Ascending aorta (tissue), 2 donors: ENCODE measurements at regions of chr22 and their contacts with region 1.

Region 1: DNA sequence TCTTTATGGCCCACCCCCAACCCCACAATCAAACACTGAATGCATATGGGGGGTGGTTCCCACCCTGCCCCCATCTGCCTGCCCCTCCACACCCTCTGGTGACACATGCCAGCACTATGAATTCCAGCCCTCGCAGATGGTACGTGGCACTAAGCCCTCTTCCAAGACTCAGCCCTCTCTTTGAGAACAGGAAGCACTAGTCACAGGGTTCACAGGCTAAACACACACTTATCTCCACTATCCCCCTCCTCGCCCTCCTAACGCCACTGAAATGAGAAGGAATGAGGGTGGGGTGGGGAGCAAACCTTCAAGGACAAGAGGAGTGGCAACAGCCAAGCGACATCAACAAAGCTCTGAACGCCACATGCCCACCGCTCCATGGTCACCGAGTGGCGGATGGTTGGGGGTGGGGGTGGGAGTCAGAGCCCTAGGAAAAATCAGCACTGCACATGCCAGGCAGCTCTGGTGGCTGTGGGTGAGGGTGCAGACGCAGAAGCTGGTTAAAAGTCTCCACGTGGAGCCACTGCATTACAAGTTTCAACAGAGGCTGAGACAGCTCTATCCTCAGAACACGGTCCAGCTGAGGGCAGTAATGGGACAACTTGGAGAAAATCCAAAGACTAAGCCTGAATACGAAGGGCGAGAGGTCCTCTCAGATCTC is 33.6 kb downstream of the TMEM184B start:
- DNase-seq: peak in 1 of 2 donors; percentile 85
- H3K4me3 ChIP-seq: peak overlapping the region in 1 of 2 donors; percentile 29
- H3K27ac ChIP-seq: peak overlapping the region; percentile 75 to 81
- H3K4me1 ChIP-seq: peaks cover 9 to 36% of the 10 kb centered on the region in 2 donors
- H3K27me3 ChIP-seq: no peaks in the 10 kb centered on the region
- CTCF ChIP-seq: peak in 2 of 3 experiments; percentile 37 to 50

Region 2: DNA sequence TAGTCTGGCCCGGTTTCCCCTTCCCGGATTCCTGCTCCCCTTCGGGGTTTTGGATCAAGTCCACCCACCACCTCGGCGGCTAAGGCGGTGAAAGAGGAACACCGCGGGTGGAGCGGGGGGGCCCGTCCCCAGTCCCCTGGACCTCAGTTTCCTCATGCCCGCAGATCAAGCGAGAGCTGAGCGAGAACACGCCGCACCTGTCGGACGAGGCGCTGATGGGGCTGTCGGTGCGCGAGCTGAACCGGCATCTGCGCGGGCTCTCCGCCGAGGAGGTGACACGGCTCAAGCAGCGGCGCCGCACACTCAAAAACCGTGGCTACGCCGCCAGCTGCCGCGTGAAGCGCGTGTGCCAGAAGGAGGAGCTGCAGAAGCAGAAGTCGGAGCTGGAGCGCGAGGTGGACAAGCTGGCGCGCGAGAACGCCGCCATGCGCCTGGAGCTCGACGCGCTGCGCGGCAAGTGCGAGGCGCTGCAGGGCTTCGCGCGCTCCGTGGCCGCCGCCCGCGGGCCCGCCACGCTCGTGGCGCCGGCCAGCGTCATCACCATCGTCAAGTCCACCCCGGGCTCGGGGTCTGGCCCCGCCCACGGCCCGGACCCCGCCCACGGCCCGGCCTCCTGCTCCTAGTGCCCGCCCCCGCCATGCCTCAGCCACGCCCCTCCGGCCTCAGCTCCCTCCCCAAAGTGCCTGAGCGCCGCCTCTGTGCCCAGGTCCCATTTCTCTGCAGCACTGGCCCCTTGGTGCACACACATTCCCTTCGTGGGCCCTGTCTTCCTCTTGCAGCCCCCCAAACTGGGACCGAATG is 24.8 kb before region 1 on chr22:
- intact Hi-C with region 1: loop called (anchors 2 kb)
- DNase-seq: no peak
- H3K4me3 ChIP-seq: peak overlapping the region in 1 of 2 donors; percentile 50
- H3K27ac ChIP-seq: peak overlapping the region; percentile 30 to 35
- H3K4me1 ChIP-seq: peaks cover 21 to 29% of the 10 kb centered on the region in 2 donors
- H3K27me3 ChIP-seq: no peaks in the 10 kb centered on the region
- CTCF ChIP-seq: peak in 1 of 3 experiments; percentile 24

Region 3: DNA sequence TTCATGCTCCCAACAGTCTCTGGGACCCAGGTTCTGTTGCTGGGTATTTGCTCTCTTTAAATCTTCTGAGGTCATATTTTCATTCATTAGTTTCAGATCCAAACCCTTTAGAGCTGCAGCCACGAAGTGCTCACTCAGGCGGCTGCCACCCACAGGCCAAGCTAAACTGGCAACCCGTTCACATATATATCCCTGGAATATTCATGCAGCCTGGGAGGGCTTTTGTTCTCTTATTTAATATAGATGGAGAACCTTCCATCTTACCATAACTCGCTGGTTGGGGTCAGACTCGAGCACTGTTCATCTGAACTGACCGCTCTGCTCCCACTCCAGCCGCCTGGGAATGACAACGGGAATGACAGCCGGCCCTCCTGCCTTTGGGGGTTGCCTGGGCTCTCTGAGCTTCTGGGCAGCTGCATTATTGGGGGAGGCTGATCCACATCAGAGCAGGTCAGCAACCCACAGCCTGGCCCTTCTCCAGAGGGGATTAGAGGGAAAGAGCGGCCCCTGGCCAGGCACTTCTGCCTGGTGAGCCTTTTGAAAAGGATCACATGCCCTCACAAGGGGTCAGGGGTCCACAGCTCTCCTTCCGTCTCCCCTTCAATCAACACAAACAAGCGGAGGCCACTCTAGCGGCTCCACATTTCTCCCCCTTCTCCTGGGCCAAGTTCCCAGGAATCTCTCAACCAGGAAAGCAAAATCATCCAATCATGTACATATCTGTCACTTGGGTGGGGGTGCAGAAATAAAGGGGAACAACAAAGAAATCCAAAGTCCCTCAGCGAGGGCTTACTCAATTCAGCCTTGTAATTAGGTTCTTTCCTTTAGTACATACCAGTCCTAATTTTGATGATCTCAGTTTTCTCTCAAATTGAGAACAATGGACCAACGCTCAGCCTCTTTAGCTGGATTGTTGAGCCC is 21.8 kb after region 1 on chr22:
- intact Hi-C with region 1: loop called (anchors 2 kb)
- DNase-seq: no peak
- H3K4me3 ChIP-seq: peak overlapping the region in 1 of 2 donors; percentile 16
- H3K27ac ChIP-seq: peak overlapping the region; percentile 83 to 88
- H3K4me1 ChIP-seq: peaks cover 12 to 50% of the 10 kb centered on the region in 2 donors
- H3K27me3 ChIP-seq: no peaks in the 10 kb centered on the region
- CTCF ChIP-seq: peak in 2 of 3 experiments; percentile 14 to 37

Region 4: GRCh38 chr22:38284042-38284402 is 44.8 kb after region 1 on chr22:
- intact Hi-C with region 1: loop called (anchors 5 kb)
- DNase-seq: peak in 1 of 2 donors; percentile 92
- H3K4me3 ChIP-seq: no peak overlapping the region
- H3K27ac ChIP-seq: peak overlapping the region; percentile 71 to 95
- H3K4me1 ChIP-seq: peaks cover 3 to 15% of the 10 kb centered on the region in 2 donors
- H3K27me3 ChIP-seq: no peaks in the 10 kb centered on the region
- CTCF ChIP-seq: no peak